Caco-2 (cell line): ENCODE measurements at regions of chr3 and their contacts with region 1.

Region 1: DNA sequence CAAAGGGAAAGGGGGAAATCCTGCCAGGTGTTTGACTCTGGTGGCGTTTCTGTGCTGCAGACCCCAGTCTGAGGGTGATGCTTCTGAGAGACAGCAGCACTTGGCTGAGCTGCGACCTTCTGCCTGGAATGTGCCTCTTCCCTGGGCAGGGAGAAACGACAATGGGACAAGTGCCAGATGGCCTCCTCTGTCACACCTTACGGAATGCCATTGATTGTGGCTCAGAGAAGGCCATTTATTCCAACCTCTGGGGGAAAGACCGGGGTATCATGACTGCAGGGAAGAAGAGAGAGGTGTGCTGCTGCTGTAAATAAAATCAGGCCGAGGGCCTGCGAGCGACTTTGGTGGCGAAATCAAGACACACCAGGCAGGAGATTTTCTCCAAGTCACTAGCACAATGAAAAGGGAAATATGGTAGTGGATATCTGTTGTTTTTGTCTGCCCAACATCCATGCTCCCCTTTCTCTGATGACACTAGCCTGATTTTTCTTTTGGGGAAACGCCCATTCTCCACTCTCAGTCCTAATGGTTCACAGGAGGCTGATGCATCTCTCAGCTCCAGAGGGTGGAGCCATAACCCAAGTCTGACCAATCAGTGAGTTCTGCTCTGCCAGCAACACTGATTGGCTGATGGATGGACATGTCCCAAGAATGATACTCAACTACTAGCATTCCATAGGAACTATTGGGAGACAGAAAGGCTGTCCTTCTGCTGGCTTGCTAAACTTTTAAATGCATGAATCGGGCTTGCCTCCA is 336.1 kb downstream of the FOXP1 start:
- DNase-seq: peak; percentile 75 to 88
- H3K4me3 ChIP-seq: no peak overlapping the region
- H3K4me3 Mint-ChIP-seq: peak overlapping the region; percentile 24
- H3K27ac Mint-ChIP-seq: peak overlapping the region; percentile 83
- H3K4me1 ChIP-seq: peaks cover 69% of the 10 kb centered on the region
- H3K4me1 Mint-ChIP-seq: peaks cover 57% of the 10 kb centered on the region
- H3K27me3 ChIP-seq: no peaks in the 10 kb centered on the region
- H3K27me3 Mint-ChIP-seq: no peaks in the 10 kb centered on the region
- CTCF ChIP-seq: no peak

Region 2: DNA sequence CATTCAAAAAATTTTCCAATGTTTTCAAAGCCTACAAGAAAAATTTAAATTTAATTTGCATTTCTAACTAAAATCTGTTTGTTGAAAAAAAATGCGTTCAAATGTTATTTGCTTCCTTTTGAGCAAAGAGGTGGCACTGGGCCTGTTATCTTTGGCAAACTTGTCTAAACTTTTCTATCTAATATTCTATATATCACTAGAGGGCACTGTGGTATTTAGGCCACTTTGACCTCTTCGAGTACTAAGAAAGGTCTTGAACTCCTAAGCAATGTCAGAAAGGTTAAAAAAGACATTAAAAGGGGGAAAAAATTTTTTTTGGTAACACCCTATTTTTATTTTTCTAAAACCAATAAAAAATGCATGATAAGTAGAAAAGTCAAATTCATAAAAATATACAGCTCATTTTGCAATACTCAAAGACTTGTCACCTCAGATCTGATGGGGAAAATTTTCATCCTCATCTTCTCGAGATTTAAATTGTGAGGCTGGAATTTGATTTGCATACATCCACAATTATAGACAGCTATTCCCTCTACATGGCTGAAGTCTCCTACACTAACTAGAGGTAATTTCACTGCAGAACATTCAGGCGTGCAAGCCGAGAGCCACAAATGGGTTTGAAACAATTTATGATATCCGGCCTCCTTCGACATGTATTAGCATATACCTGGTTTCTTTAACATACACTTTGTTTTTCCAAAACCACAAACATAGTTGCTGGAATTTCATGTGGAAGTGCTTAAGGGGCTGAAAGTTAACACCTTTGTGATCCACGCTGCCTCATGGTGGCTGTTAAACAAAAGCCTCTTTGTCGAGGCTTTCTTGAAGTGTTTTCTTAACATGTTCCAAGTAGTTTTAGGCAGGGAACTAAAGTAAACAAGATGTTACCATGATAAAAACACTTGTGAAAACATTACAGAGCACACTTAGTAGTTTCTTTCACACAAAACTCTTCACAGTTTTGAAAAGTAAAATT is 240.3 kb before region 1 on chr3:
- CTCF ChIA-PET with region 1: no interaction called
- POLR2A ChIA-PET with region 1: no interaction called
- intact Hi-C with region 1: loop called (anchors 5 kb)
- DNase-seq: peak in 1 of 2 experiments; percentile 13
- H3K4me3 ChIP-seq: no peak overlapping the region
- H3K4me3 Mint-ChIP-seq: no peak overlapping the region
- H3K27ac Mint-ChIP-seq: no peak overlapping the region
- H3K4me1 ChIP-seq: peaks cover 15% of the 10 kb centered on the region
- H3K4me1 Mint-ChIP-seq: peaks cover 6% of the 10 kb centered on the region
- H3K27me3 ChIP-seq: no peaks in the 10 kb centered on the region
- H3K27me3 Mint-ChIP-seq: no peaks in the 10 kb centered on the region
- CTCF ChIP-seq: peak in 1 of 2 experiments; percentile 40

Region 3: DNA sequence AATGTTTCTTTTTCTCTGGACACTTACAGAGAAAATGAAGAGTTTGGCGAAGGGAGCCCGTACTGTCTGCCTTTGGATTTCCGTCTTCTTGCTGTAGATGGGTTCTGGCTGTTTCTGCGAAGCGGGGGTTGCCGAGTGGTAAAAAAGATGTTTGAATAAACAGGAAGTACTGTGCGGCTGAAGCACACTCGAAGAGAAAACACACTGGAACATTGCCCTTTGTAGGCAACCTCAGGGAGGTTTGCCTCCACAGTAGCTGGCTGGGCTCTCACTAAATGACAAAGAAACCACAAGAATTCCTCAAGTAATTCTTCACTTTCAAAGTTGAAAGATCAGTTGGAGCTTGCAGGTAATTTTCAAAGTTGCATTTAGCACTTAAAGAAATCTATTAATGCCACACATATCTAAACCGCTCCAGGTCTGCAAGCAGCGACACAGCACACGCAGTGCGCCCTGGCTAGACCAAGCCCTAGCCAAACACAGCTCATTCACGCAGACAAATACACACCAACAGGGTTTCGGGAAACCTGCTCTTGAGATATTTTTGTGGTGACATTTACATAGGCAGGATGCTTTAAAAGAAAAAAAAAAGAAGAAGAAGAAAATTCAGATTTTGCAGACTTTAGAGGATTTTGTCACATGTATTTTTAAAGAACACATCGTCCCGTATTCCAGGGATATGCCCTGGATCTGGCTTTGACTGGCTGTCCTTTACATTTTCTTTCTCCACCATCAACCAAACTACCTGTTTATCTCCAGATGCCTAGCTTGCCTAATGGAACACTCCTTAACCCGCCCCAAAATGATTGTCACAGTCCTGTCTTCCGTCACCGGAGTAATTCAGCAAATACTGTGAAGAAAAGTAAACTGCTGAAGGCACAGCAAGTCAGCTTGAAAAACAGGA is 116.7 kb before region 1 on chr3:
- CTCF ChIA-PET with region 1: no interaction called
- POLR2A ChIA-PET with region 1: no interaction called
- intact Hi-C with region 1: loop called (anchors 2 kb)
- DNase-seq: peak in 1 of 2 experiments; percentile 56
- H3K4me3 ChIP-seq: peak overlapping the region; percentile 50
- H3K4me3 Mint-ChIP-seq: peak overlapping the region; percentile 94
- H3K27ac Mint-ChIP-seq: peak overlapping the region; percentile 83
- H3K4me1 ChIP-seq: peaks cover 66% of the 10 kb centered on the region
- H3K4me1 Mint-ChIP-seq: peaks cover 37% of the 10 kb centered on the region
- H3K27me3 ChIP-seq: no peaks in the 10 kb centered on the region
- H3K27me3 Mint-ChIP-seq: no peaks in the 10 kb centered on the region
- CTCF ChIP-seq: no peak

Region 4: GRCh38 chr3:71191031-71191482 is 56.3 kb before region 1 on chr3:
- CTCF ChIA-PET with region 1: interaction called, 3 read pairs
- POLR2A ChIA-PET with region 1: no interaction called
- intact Hi-C with region 1: loop called (anchors 1 kb)
- DNase-seq: peak; percentile 75 to 77
- H3K4me3 ChIP-seq: no peak overlapping the region
- H3K4me3 Mint-ChIP-seq: no peak overlapping the region
- H3K27ac Mint-ChIP-seq: peak overlapping the region; percentile 74
- H3K4me1 ChIP-seq: peaks cover 59% of the 10 kb centered on the region
- H3K4me1 Mint-ChIP-seq: peaks cover 52% of the 10 kb centered on the region
- H3K27me3 ChIP-seq: no peaks in the 10 kb centered on the region
- H3K27me3 Mint-ChIP-seq: no peaks in the 10 kb centered on the region
- CTCF ChIP-seq: peak in 1 of 2 experiments; percentile 5

Region 5: GRCh38 chr3:71305231-71306206 is 58.1 kb after region 1 on chr3:
- CTCF ChIA-PET with region 1: no interaction called
- POLR2A ChIA-PET with region 1: interaction called, 10 read pairs
- intact Hi-C with region 1: loop called (anchors 1 kb)
- DNase-seq: peak; percentile 36 to 41
- H3K4me3 ChIP-seq: peak overlapping the region; percentile 47
- H3K4me3 Mint-ChIP-seq: peak overlapping the region; percentile 93
- H3K27ac Mint-ChIP-seq: peak overlapping the region; percentile 91
- H3K4me1 ChIP-seq: peaks cover 26% of the 10 kb centered on the region
- H3K4me1 Mint-ChIP-seq: peaks cover 36% of the 10 kb centered on the region
- H3K27me3 ChIP-seq: no peaks in the 10 kb centered on the region
- H3K27me3 Mint-ChIP-seq: no peaks in the 10 kb centered on the region
- CTCF ChIP-seq: no peak